GM13976 (cell line): ENCODE measurements at regions of chr7 and their contacts with region 1.

Region 1: DNA sequence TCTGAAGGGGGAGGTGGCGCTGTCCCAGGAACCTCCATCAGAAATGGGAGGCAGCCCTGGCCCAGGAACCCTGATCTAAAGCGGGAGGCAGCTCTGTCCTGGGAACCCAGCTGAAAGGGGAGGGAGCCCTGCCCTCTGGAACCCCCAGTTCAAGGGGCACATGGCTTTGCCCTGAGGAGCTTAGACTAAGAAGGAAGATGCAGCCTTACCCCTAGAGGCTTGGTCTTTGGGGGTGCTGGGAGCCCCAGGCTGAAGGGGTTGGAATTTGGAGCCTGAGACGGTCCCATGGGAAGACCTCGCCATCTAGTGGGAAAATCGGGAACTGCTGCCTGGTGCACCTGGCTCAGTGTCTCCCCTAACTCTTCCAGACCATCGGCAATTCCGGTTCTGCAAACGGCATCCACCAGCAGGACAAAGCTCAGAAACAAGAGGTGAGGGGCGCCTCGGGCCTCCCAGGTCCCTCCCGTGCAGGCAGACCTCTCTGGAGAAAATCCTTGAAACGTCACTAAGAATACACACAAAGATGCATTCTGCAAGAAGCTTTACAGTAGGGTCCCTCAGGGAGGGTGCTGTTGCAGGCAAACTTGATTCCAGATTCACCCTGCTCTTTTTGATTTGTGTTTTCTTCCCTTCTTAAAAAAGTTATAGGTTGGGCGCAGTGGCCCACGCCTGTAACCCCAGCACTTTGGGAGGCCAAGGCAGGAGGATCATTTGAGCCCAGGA is 52.4 kb upstream of the GTF2IRD1 start:
- DNase-seq: peak; percentile 86
- CTCF ChIP-seq: peak; percentile 98

Region 2: DNA sequence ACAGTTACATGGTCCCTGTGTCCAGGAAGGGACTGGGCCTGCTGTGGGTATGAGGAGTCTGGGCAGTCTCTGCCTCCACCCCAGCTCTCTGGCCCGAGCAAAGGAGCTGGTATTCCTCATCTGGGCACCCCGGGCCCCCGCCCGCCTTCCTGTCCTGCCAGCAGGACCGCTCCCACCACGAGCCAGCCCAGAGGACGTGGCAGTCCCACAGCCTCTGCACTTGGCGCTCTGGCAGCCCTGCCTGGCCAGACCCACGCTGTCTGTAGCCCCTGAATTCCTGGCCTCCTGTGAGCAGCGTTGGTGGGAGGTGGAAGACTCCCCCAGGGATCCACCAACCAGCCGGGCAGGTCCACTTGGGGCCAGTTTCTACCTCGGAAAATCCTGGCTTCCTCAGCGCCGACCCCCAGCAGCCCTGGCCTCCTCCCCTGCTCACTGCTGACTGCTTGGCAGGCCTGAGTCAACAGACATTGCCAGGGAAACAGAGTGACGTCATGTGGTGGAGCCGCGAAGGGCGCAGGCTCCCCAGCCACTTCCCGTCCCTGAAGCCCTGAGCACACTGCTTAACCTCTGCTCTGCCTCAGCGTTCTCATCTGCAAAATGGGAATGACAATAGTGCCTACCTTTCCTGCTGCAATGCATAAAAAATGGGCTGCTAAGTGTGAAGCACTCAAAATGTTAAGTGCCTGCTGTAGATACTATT is 339.3 kb before region 1 on chr7:
- in situ Hi-C with region 1: loop called (anchors 10 kb)
- DNase-seq: peak; percentile 80
- CTCF ChIP-seq: no peak

Region 3: GRCh38 chr7:74206589-74207120 is 194.6 kb before region 1 on chr7:
- in situ Hi-C with region 1: loop called (anchors 10 kb)
- DNase-seq: peak; percentile 87
- CTCF ChIP-seq: peak; percentile 98